Naive thymus-derived CD4-positive, alpha-beta T cell (primary cell): ENCODE measurements at regions of chr2 and their contacts with region 1.

Region 1: GRCh38 chr2:172555522-172556283 is at the start of gene PDK1:
- DNase-seq: peak; percentile 89 to 95 (median 94)
- ATAC-seq: peak; percentile 97
- H3K4me3 ChIP-seq: peak within 1 kb of the TSS; percentile 84
- H3K4me3 Mint-ChIP-seq: peak within 1 kb of the TSS; percentile 88 to 99 (median 93)
- H3K27ac ChIP-seq: peak within 1 kb of the TSS; percentile 98
- H3K27ac Mint-ChIP-seq: peak within 1 kb of the TSS; percentile 86 to 97 (median 95)
- H3K4me1 ChIP-seq: peaks cover 10 to 29% of the 10 kb centered on the region in 2 donors
- H3K4me1 Mint-ChIP-seq: peaks cover 37 to 72% (median 64%) of the 10 kb centered on the region in 7 donors
- H3K27me3 ChIP-seq: no peaks in the 10 kb centered on the region
- H3K27me3 Mint-ChIP-seq: peaks cover 0 to 5% (median 0%) of the 10 kb centered on the region in 5 donors
- total RNA-seq, gene PDK1: 56.0 to 70.6 (median 66.6) TPM

Region 2: DNA sequence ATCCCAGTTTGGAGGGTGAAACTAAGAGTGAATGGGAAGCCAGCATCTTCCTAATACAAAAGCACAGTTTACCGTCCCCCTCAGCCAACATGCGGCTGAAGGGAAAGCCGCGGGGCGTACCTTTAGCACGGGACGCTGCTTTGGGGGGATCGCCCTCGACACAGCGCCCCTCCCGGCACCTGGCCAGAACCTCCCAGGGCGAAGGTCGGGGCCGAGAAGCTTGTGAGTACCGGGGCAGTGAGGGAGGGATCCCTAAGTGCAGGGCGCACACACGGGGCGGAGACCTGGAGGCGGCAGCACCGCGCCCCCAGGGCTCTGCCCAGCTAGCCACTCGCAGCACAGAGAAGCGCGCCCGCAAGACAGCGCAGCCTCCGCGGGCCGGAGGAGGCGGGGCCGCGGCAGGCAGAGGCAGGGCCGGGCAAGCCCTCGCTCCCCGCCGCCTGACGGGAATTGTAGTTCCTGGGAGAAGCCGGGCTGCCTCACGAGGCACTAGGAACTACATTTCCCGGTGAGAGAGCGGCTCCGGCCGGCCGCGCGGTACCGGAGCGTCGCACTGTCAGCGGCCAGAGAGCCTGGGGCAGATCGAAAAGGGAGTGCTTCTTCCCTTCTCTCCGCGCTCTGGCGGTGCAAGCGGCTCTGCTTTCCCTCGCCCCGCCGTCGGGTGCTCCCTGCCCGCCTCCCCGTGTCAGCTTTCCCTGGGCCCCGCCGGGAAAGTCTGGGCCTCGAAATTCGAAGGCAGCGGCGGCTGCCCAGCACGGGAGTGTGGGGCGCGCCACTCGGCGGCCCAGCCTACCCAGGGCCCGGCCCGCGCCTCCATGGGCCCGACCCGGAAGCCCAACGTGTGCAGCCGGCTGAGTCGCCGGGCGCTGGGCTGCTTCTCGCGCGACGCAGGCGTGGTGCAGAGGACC is 1121.7 kb before region 1 on chr2 and contains the starts of genes DCAF17 and METTL8:
- CTCF ChIA-PET with region 1: no interaction called
- POLR2A ChIA-PET with region 1: no interaction called
- intact Hi-C with region 1: loop called (anchors 1 kb)
- DNase-seq: peak; percentile 84 to 93 (median 91)
- ATAC-seq: peak; percentile 95
- H3K4me3 ChIP-seq: peak within 1 kb of the TSS; percentile 87
- H3K4me3 Mint-ChIP-seq: peak within 1 kb of the TSS; percentile 82 to 97 (median 90)
- H3K27ac ChIP-seq: peak within 1 kb of the TSS; percentile 92
- H3K27ac Mint-ChIP-seq: peak within 1 kb of the TSS; percentile 84 to 98 (median 95)
- H3K4me1 ChIP-seq: peaks cover 15 to 28% of the 10 kb centered on the region in 2 donors
- H3K4me1 Mint-ChIP-seq: peaks cover 30 to 56% (median 51%) of the 10 kb centered on the region in 7 donors
- H3K27me3 ChIP-seq: no peaks in the 10 kb centered on the region
- H3K27me3 Mint-ChIP-seq: no peaks in the 10 kb centered on the region
- total RNA-seq, gene DCAF17: 19.0 to 40.3 (median 23.7) TPM
- total RNA-seq, gene METTL8: 11.8 to 21.6 (median 14.8) TPM

Region 3: GRCh38 chr2:171922230-171923022 is 633.3 kb before region 1 on chr2 and contains the start of gene HAT1:
- CTCF ChIA-PET with region 1: no interaction called
- POLR2A ChIA-PET with region 1: no interaction called
- intact Hi-C with region 1: loop called (anchors 1 kb)
- DNase-seq: peak; percentile 92 to 98 (median 97)
- ATAC-seq: peak; percentile 99
- H3K4me3 ChIP-seq: peak within 1 kb of the TSS; percentile 75
- H3K4me3 Mint-ChIP-seq: peak within 1 kb of the TSS; percentile 90 to 100 (median 99)
- H3K27ac ChIP-seq: peak within 1 kb of the TSS; percentile 93
- H3K27ac Mint-ChIP-seq: peak within 1 kb of the TSS; percentile 96 to 100 (median 99)
- H3K4me1 ChIP-seq: peaks cover 13 to 17% of the 10 kb centered on the region in 2 donors
- H3K4me1 Mint-ChIP-seq: peaks cover 20 to 50% (median 42%) of the 10 kb centered on the region in 7 donors
- H3K27me3 ChIP-seq: no peaks in the 10 kb centered on the region
- H3K27me3 Mint-ChIP-seq: no peaks in the 10 kb centered on the region
- total RNA-seq, gene HAT1: 22.1 to 55.4 (median 26.4) TPM

Region 4: DNA sequence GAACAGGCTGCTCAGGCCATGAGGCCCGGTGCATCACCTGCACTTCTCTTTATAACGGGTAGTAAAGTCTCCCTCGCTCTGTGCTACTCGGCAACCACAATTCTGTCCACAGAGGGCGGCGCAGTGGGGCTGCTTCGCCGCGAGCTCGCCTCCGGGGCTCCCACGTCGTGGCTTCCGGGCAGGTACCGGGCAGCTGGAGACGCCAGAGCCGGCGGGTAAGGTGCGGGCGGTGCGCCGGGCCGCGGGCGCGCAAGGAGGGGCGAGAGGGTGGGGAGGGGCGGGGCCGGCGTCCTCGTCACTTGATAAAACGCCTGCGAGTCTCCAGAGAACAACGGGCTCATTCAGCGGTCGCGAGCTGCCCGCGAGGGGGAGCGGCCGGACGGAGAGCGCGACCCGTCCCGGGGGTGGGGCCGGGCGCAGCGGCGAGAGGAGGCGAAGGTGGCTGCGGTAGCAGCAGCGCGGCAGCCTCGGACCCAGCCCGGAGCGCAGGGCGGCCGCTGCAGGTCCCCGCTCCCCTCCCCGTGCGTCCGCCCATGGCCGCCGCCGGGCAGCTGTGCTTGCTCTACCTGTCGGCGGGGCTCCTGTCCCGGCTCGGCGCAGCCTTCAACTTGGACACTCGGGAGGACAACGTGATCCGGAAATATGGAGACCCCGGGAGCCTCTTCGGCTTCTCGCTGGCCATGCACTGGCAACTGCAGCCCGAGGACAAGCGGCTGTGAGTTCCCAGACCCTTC is 128.3 kb before region 1 on chr2 and contains the start of gene ITGA6:
- CTCF ChIA-PET with region 1: interaction called, 3 read pairs
- POLR2A ChIA-PET with region 1: no interaction called
- intact Hi-C with region 1: loop called in 1 of 2 experiments (anchors 1 kb)
- DNase-seq: peak; percentile 55 to 84 (median 80)
- ATAC-seq: peak; percentile 81
- H3K4me3 ChIP-seq: peak within 1 kb of the TSS; percentile 76
- H3K4me3 Mint-ChIP-seq: peak within 1 kb of the TSS in 7 of 10 donors; percentile 92 to 100 (median 98)
- H3K27ac ChIP-seq: peak within 1 kb of the TSS; percentile 76
- H3K27ac Mint-ChIP-seq: peak within 1 kb of the TSS in 8 of 9 donors; percentile 90 to 96 (median 95)
- H3K4me1 ChIP-seq: peaks cover 17 to 44% of the 10 kb centered on the region in 2 donors
- H3K4me1 Mint-ChIP-seq: peaks cover 21 to 65% (median 46%) of the 10 kb centered on the region in 7 donors
- H3K27me3 ChIP-seq: no peaks in the 10 kb centered on the region
- H3K27me3 Mint-ChIP-seq: peaks cover 0 to 82% (median 0%) of the 10 kb centered on the region in 5 donors
- total RNA-seq, gene ITGA6: 13.1 to 179 (median 135) TPM

Region 5: GRCh38 chr2:172513935-172514586 is 41.6 kb before region 1 on chr2:
- CTCF ChIA-PET with region 1: no interaction called
- POLR2A ChIA-PET with region 1: interaction called, 5 read pairs
- intact Hi-C with region 1: loop called in 1 of 2 experiments (anchors 5 kb)
- DNase-seq: no peak
- ATAC-seq: peak; percentile 74
- H3K4me3 ChIP-seq: no peak overlapping the region
- H3K4me3 Mint-ChIP-seq: no peak overlapping the region
- H3K27ac ChIP-seq: no peak overlapping the region
- H3K27ac Mint-ChIP-seq: peak overlapping the region in 2 of 9 donors; percentile 22 to 67
- H3K4me1 ChIP-seq: peaks cover 0 to 15% of the 10 kb centered on the region in 2 donors
- H3K4me1 Mint-ChIP-seq: peaks cover 11 to 47% (median 26%) of the 10 kb centered on the region in 7 donors
- H3K27me3 ChIP-seq: no peaks in the 10 kb centered on the region
- H3K27me3 Mint-ChIP-seq: no peaks in the 10 kb centered on the region

Region 6: GRCh38 chr2:172938713-172939375 is 383.1 kb after region 1 on chr2:
- CTCF ChIA-PET with region 1: no interaction called
- POLR2A ChIA-PET with region 1: no interaction called
- intact Hi-C with region 1: no loop called
- DNase-seq: no peak
- ATAC-seq: no peak
- H3K4me3 ChIP-seq: no peak overlapping the region
- H3K4me3 Mint-ChIP-seq: no peak overlapping the region
- H3K27ac ChIP-seq: no peak overlapping the region
- H3K27ac Mint-ChIP-seq: no peak overlapping the region
- H3K4me1 ChIP-seq: peaks cover 0 to 12% of the 10 kb centered on the region in 2 donors
- H3K4me1 Mint-ChIP-seq: peaks cover 6 to 17% (median 13%) of the 10 kb centered on the region in 7 donors
- H3K27me3 ChIP-seq: no peaks in the 10 kb centered on the region
- H3K27me3 Mint-ChIP-seq: peaks cover 0 to 23% (median 0%) of the 10 kb centered on the region in 5 donors

Region 7: DNA sequence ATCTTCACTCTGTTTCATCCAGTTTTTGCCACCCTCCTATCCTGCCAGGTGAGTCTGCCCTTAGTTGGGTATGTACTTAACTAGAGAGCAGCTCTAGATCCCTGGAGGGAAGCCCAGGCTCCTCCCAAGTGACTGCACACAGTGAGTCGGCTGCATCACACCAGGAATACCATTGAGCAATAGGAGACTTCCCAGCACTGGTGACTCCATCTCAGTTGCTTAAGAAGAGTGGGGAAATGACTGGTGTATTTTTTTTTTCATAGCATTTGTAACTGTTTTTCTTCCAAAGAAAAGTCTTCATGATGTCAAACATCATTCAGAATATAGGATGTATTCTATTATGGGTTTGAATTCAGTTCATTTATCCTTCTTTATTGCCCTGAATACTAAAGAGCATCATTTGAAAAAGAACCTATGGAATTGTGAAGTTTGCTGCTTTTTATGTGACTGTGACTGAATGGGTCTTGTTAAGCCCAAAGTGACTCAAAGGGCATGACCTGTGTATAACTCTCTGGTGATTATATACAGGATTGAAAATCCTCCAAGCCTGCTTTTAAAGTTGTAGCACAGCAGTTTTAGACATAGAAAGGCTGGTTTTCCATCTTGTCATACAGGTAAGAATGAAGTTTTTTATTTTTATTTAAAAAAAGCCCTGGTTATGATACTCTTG is 604.2 kb after region 1 on chr2:
- CTCF ChIA-PET with region 1: no interaction called
- POLR2A ChIA-PET with region 1: no interaction called
- intact Hi-C with region 1: no loop called
- DNase-seq: no peak
- ATAC-seq: peak; percentile 83
- H3K4me3 ChIP-seq: no peak overlapping the region
- H3K4me3 Mint-ChIP-seq: no peak overlapping the region
- H3K27ac ChIP-seq: no peak overlapping the region
- H3K27ac Mint-ChIP-seq: no peak overlapping the region
- H3K4me1 ChIP-seq: no peaks in the 10 kb centered on the region
- H3K4me1 Mint-ChIP-seq: no peaks in the 10 kb centered on the region
- H3K27me3 ChIP-seq: no peaks in the 10 kb centered on the region
- H3K27me3 Mint-ChIP-seq: peaks cover 0 to 32% (median 8%) of the 10 kb centered on the region in 5 donors

Region 8: GRCh38 chr2:173354601-173355131 is 799.0 kb after region 1 on chr2 and contains the start of gene CDCA7:
- CTCF ChIA-PET with region 1: no interaction called
- POLR2A ChIA-PET with region 1: no interaction called
- intact Hi-C with region 1: loop called in 1 of 2 experiments (anchors 10 kb)
- DNase-seq: peak in 8 of 9 donors; percentile 2 to 84 (median 26)
- ATAC-seq: peak; percentile 64
- H3K4me3 ChIP-seq: peak within 1 kb of the TSS; percentile 67
- H3K4me3 Mint-ChIP-seq: peak within 1 kb of the TSS; percentile 87 to 95 (median 90)
- H3K27ac ChIP-seq: no peak within 1 kb of the TSS
- H3K27ac Mint-ChIP-seq: peak within 1 kb of the TSS in 4 of 9 donors; percentile 23 to 97 (median 46)
- H3K4me1 ChIP-seq: peaks cover 6 to 17% of the 10 kb centered on the region in 2 donors
- H3K4me1 Mint-ChIP-seq: peaks cover 7 to 57% (median 18%) of the 10 kb centered on the region in 7 donors
- H3K27me3 ChIP-seq: peaks cover 0 to 2% of the 10 kb centered on the region in 2 donors
- H3K27me3 Mint-ChIP-seq: peaks cover 18 to 62% (median 50%) of the 10 kb centered on the region in 5 donors
- total RNA-seq, gene CDCA7: 0.46 to 86.7 (median 0.85) TPM